ENCODE measurements at regions of chr10 and their contacts with region 1.

Region 1: GRCh38 chr10:104291439-104291951 is 22.5 kb downstream of the GSTO2 start:
- DNase-seq: peak; percentile 92
- CTCF ChIP-seq: peak; percentile 99

Region 2: GRCh38 chr10:104274762-104275721 is 16.5 kb before region 1 on chr10:
- CTCF ChIA-PET with region 1: interaction called, 218 read pairs
- POLR2A ChIA-PET with region 1: no interaction called
- DNase-seq: peak; percentile 73
- CTCF ChIP-seq: peak; percentile 76

Region 3: DNA sequence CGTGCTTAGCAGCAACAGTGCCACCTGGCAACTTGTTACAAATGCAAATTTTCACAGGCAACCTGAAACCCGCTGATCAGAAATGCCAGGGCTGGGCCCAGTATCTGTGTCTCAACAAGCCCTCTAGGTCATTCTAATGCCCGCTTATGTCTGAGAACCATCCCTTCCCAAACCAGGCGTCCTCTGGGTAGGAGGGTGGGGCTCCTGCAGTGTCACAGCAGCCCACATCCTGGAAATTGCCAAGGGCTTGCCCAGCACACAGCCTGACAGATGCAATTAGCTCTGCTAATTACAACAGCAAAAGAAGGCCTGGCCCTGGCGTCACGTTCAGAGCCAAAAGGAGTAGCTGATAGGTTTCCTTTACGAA is 30.9 kb after region 1 on chr10:
- CTCF ChIA-PET with region 1: interaction called, 38 read pairs
- POLR2A ChIA-PET with region 1: no interaction called
- DNase-seq: no peak
- CTCF ChIP-seq: no peak

Region 4: DNA sequence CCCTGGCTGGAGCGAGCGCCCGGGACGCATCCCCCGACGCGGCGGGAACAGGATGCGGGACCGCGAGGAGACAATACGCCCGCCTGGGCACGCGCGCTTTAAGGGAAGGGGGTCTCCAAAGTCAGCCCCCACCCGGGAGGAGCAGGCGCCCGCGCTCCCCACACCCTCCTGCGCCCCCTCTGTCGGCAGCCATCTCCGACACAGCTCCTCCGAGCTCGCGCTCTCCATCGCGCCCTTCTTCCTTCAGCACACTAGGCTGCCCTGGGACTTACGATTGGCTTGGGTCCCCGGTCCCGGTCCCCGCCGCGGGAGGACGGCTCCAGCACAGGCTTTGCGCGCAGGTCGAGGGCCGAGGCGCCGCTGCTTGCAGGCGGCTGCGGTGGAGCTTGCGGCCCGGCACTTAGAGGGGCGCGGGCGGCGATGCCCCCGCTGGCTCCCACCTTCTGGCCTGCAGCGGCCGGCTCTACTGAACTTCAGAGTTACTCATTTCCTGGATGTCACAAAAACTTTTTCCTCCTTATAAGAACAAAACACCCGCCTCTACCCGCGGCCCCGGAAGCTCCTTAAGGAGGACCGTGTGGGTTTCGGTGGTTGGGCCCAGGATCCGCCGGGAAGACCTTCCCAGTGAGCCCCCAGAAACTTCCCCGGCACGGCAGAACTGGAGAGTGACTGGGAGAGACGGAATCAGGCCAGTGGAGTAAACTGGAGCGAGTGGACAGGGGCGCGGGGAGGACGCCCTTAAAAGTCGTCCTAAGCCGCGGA is 46.7 kb after region 1 on chr10 and contains the start of gene ITPRIP:
- CTCF ChIA-PET with region 1: interaction called, 31 read pairs
- POLR2A ChIA-PET with region 1: no interaction called
- DNase-seq: peak; percentile 79
- CTCF ChIP-seq: no peak

Region 5: DNA sequence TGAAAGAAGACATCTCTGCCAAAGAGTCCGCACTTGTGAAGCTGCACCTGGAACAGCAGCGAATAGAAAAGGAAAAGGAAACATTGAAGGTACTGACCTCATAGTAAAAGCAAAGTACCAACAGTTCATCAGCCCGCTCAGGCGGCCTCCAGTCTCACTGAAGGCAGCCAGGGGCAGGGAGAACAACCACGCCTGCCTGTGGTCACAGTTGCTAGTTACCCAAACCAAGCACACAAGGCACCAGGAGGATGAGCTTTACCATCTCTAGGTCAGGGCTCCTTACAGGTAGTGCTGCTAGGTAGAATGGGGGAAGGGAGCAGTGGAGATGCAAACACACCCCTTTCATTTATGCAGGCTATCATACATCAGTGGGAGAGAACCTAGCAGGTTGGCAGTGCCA is 101.9 kb after region 1 on chr10:
- CTCF ChIA-PET with region 1: interaction called, 14 read pairs
- POLR2A ChIA-PET with region 1: no interaction called
- DNase-seq: no peak
- CTCF ChIP-seq: no peak